ENCODE measurements at regions of chr3 and their contacts with region 1.

Region 1: DNA sequence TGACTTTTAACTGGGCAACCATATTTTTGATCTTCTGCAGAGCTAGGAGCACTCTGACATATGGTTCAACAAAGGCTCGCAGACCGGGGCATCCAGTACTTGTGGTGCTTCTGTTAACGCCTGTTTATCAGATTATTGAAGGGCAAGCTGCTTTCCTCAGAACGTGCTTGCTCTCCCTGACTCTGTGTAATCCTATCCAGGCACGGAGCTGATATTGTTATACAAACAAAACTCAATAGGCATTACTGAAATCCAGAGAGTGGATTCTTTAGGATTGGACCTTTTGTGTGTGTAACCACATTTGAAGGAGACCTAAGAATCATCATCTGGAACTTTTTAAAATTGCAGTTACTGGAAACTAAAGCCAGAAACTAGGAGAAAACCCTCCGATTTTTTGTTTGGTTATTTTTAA is 246.5 kb downstream of the PTPRG start:
- DNase-seq: no peak
- ATAC-seq: no peak
- H3K4me3 ChIP-seq: no peak overlapping the region
- H3K27ac ChIP-seq: peak overlapping the region in 1 of 2 donors; percentile 51
- H3K4me1 ChIP-seq: peaks cover 7 to 29% of the 10 kb centered on the region in 2 donors
- H3K27me3 ChIP-seq: no peaks in the 10 kb centered on the region

Region 2: GRCh38 chr3:61750766-61751165 is 57.1 kb before region 1 on chr3:
- intact Hi-C with region 1: loop called in 1 of 2 experiments (anchors 10 kb)
- DNase-seq: no peak
- ATAC-seq: no peak
- H3K4me3 ChIP-seq: no peak overlapping the region
- H3K27ac ChIP-seq: no peak overlapping the region
- H3K4me1 ChIP-seq: peaks cover 5 to 6% of the 10 kb centered on the region in 2 donors
- H3K27me3 ChIP-seq: no peaks in the 10 kb centered on the region

Region 3: GRCh38 chr3:61772441-61772840 is 35.4 kb before region 1 on chr3:
- intact Hi-C with region 1: loop called in 1 of 2 experiments (anchors 1 kb)
- DNase-seq: no peak
- ATAC-seq: no peak
- H3K4me3 ChIP-seq: no peak overlapping the region
- H3K27ac ChIP-seq: no peak overlapping the region
- H3K4me1 ChIP-seq: peaks cover under 1 to 5% of the 10 kb centered on the region in 2 donors
- H3K27me3 ChIP-seq: no peaks in the 10 kb centered on the region

Measured in aorta (tissue), 5 donors.